K562 (cell line): ENCODE measurements at regions of chr1 and their contacts with region 1.

Region 1: DNA sequence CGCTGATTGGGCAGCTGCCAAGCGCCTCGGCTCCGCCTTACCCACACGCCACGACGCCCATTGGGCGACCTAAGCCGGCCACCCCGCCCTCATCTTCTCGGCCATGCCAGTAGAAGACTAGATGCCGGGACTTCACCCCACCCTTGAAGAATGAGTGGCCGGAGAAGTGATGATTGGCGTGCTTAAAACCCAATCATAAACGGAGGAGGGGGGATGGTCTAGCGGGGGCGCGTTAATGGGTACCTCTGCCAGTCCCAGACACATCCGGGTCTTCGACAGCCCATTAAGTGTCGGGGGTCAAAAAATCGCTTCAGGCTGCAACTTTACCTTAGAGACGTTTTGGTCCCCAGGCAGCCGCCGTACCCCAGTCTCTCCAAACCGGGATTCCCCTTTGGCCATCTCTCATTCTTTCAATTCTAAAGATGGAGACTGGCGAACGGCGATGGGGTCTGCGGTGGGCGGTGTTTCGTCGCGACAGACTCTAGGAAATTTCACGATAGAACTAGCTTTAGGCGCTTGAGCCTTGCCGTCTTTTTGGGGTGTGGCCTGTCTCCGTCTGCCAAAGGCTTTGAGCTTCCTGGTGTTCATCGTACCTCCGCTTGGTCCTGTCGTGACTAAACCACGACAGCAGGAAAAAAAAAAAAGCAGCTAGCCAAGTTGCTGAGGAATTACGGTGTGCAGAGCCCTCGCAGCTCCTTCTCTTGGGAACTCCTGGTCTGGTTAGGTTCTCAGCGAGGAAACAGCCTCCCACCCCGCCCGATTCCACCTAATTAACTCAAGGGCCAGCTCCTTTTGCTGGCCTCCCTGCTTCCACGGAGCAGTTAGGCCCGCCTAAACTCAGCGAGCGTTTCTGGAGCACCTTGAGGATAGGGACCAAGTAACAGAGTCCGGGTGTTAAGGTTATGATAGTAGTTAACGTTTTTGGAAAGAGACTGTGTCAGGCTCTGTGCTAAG is at the start of gene GATAD2B:
- DNase-seq: peak; percentile 92 to 100 (median 96)
- ATAC-seq: peak; percentile 94
- H3K4me3 ChIP-seq: peak within 1 kb of the TSS; percentile 86
- H3K27ac ChIP-seq: peak within 1 kb of the TSS; percentile 98
- H3K4me1 ChIP-seq: peaks cover 9 to 28% of the 10 kb centered on the region in 2 experiments
- H3K27me3 ChIP-seq: no peaks in the 10 kb centered on the region
- CTCF ChIP-seq: 0 out of 6 replicates have a peak, but pooled peaks of 1 of the 3 experiments have one; percentile 0
- EP300 ChIP-seq: 0 out of 2 replicates have a peak, but pooled peaks have one; percentile 8
- POLR2A ChIP-seq: peak; percentile 72
- RAD21 ChIP-seq: no peak
- polyA plus RNA-seq, gene GATAD2B: 1.5 to 6.6 TPM

Region 2: DNA sequence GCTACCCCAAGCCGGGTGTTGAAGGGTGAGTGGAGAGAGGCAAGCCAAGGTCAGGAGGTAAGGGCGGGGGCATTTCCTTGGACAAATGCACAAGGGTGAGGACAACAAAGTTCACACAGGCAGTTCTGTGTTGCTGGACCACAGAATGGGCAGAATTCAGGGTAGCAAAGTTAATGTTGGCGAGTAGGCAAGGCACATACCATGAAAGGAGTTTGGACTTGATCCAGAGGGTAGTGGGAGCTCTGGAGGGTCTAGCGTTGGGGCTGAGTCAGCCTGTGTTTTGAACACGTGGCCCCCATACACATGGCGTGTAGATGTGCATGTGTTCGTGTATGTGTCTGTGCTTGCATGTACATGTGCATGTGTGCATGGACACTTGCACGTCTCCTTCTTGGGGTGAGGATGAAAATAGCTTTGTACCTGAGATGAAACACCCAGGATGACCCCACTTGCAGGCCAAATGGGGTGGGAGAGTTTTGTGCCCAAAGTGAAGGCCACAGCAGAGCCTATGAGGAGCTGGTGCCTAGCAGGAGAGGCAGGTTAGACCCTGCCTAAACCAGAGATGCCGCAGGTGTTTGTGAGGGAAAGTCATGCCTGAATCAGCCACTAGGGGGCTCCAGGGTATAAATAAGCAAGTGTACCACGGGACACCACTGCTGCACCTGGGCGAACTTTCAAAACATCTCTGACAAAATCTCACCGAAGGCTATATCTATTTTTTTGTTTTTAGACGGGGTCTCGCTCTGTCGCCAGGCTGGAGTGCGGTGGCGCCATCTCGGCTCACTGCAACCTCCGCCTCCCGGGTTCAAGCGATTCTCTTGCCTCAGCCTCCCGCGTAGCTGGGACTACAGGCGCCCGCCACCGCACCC is 126.2 kb before region 1 on chr1:
- CTCF ChIA-PET with region 1: interaction called, 3 read pairs
- POLR2A ChIA-PET with region 1: no interaction called
- in situ Hi-C with region 1: no loop called
- intact Hi-C with region 1: loop called (anchors 5 kb)
- DNase-seq: peak; percentile 83 to 87 (median 86)
- ATAC-seq: peak; percentile 89
- H3K4me3 ChIP-seq: no peak overlapping the region
- H3K27ac ChIP-seq: no peak overlapping the region
- H3K4me1 ChIP-seq: peaks cover 0 to 42% of the 10 kb centered on the region in 2 experiments; a peak in 2 of 5 replicates
- H3K27me3 ChIP-seq: no peaks in the 10 kb centered on the region
- CTCF ChIP-seq: peak; percentile 88 to 91 (median 89)
- EP300 ChIP-seq: no peak
- POLR2A ChIP-seq: no peak
- RAD21 ChIP-seq: peak; percentile 66 to 86

Region 3: DNA sequence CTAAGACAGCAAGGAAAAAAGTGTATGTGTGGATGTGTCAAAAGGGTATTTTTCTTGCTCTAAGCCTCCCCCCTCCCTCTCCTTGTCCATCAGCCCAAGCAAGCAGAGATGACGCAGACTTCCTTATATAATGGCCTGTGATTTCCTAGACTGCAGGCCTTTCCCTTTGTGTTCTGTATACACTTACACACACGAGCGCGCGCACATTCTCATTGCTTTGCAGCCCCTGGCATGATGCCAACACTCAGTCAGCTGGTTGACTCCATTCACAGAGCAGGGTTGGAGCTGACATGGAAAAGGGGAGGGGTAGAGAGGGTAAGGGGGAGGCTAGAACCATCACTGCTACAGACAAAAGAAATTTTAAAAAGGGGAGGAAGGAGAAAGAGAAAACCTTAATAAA is 42.3 kb before region 1 on chr1:
- CTCF ChIA-PET with region 1: no interaction called
- POLR2A ChIA-PET with region 1: interaction called, 3 read pairs
- in situ Hi-C with region 1: no loop called
- intact Hi-C with region 1: loop called (anchors 5 kb)
- DNase-seq: peak in 3 of 4 experiments; percentile 27 to 71 (median 32)
- ATAC-seq: peak; percentile 73
- H3K4me3 ChIP-seq: no peak overlapping the region
- H3K27ac ChIP-seq: no peak overlapping the region
- H3K4me1 ChIP-seq: peaks cover 3 to 30% of the 10 kb centered on the region in 2 experiments; a peak in 4 of 5 replicates
- H3K27me3 ChIP-seq: no peaks in the 10 kb centered on the region
- CTCF ChIP-seq: no peak
- EP300 ChIP-seq: no peak
- POLR2A ChIP-seq: no peak
- RAD21 ChIP-seq: 0 out of 4 replicates have a peak, but pooled peaks of 1 of the 2 experiments have one; percentile 14

Region 4: GRCh38 chr1:153946622-153947241 is 23.5 kb after region 1 on chr1 and contains the start of gene DENND4B:
- CTCF ChIA-PET with region 1: no interaction called
- POLR2A ChIA-PET with region 1: interaction called, 10 read pairs
- in situ Hi-C with region 1: no loop called
- intact Hi-C with region 1: no loop called
- DNase-seq: peak; percentile 92 to 96 (median 95)
- ATAC-seq: peak; percentile 94
- H3K4me3 ChIP-seq: peak within 1 kb of the TSS; percentile 99
- H3K27ac ChIP-seq: peak within 1 kb of the TSS; percentile 85
- H3K4me1 ChIP-seq: peaks cover 12 to 32% of the 10 kb centered on the region in 2 experiments; a peak in 4 of 5 replicates
- H3K27me3 ChIP-seq: no peaks in the 10 kb centered on the region
- CTCF ChIP-seq: peak; percentile 82 to 94 (median 89)
- EP300 ChIP-seq: 0 out of 2 replicates have a peak, but pooled peaks have one; percentile 13
- POLR2A ChIP-seq: peak; percentile 41; the same call in 1 of the 2 replicates
- RAD21 ChIP-seq: peak; percentile 44 to 57; a peak in 3 of 4 replicates
- polyA plus RNA-seq, gene DENND4B: 9.5 to 13.4 TPM

Region 5: DNA sequence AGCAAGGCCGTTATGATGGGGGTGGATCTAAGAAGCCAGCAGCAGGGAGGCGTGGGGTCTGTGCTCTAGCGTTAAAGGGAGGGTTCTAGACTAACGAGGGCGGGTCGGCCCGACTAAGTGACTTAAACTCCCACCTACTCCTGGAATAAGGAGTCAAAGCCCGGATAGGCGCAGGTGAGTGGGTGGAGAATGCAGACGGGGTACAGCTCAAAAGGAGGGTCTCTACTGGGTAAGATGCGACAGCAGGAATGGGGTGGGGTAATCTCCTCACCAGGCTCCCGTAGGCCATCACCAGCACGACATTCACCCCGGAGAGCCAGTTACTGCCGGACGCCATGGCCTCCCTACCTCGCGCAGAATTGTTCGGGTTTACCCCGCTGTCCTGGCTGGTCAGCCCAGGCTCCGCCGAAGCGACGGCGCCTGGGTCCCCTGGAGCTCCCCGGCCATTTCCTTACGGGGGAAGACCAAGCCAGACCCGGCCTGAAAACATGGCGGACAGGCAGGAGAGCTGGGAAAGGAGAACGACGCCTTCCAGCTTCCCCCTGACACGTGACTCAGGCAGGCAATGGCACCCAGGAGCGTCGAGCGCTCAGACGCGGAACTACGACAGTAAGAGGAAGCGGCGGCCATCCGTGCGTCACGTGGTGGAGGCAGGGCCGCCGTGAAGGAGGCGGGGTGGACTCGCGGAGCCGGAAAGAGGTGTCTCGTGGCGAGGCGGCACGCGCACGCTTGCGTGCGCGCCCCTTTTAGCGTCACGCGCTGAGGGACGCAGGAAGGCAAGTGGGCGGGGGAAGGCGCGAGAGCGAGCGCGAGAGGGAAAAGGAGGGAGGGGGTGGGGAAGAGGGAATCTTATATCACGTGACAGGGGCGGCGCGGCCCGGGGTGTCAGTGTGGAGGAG is 297.1 kb after region 1 on chr1 and contains the start of gene UBAP2L:
- CTCF ChIA-PET with region 1: no interaction called
- POLR2A ChIA-PET with region 1: no interaction called
- in situ Hi-C with region 1: no loop called
- intact Hi-C with region 1: loop called (anchors 2 kb)
- DNase-seq: peak; percentile 84 to 100 (median 90)
- ATAC-seq: peak; percentile 92
- H3K4me3 ChIP-seq: peak within 1 kb of the TSS; percentile 76
- H3K27ac ChIP-seq: peak within 1 kb of the TSS; percentile 99
- H3K4me1 ChIP-seq: peaks cover 3 to 20% of the 10 kb centered on the region in 2 experiments; a peak in 3 of 5 replicates
- H3K27me3 ChIP-seq: no peaks in the 10 kb centered on the region
- CTCF ChIP-seq: no peak; a peak in 1 of 6 replicates
- EP300 ChIP-seq: no peak
- POLR2A ChIP-seq: peak; percentile 94
- RAD21 ChIP-seq: no peak
- polyA plus RNA-seq, gene UBAP2L: 75.0 to 92.3 TPM

Region 6: GRCh38 chr1:155352631-155353030 is 1429.4 kb after region 1 on chr1:
- CTCF ChIA-PET with region 1: no interaction called
- POLR2A ChIA-PET with region 1: no interaction called
- in situ Hi-C with region 1: no loop called
- intact Hi-C with region 1: no loop called
- DNase-seq: no peak
- ATAC-seq: no peak
- H3K4me3 ChIP-seq: no peak overlapping the region
- H3K27ac ChIP-seq: no peak overlapping the region
- H3K4me1 ChIP-seq: peaks cover 0 to 1% of the 10 kb centered on the region in 2 experiments; a peak in 1 of 5 replicates
- H3K27me3 ChIP-seq: no peaks in the 10 kb centered on the region
- CTCF ChIP-seq: no peak
- EP300 ChIP-seq: no peak
- POLR2A ChIP-seq: no peak
- RAD21 ChIP-seq: no peak